HEK293 (cell line): ENCODE measurements at regions of chr1 and their contacts with region 1.

Region 1: DNA sequence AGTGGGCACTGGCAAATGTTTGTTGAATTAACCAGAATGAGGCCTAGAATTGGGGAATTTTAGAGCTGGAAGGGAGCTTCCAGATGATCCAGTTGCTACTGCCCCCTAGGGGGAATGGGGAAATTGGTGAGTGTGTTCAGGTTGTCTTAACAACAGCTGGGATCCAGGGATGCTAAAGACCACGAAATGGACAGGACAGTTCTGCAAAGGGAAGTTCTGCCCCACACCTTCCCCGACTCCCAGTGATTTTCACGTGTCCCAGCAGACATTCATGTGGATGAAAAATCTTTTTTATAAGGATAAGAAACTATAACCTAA is 33.9 kb downstream of the TRIM62 start:
- H3K4me3 ChIP-seq: no peak overlapping the region
- H3K27ac ChIP-seq: no peak overlapping the region
- H3K4me1 ChIP-seq: no peaks in the 10 kb centered on the region
- CTCF ChIP-seq: no peak

Region 2: DNA sequence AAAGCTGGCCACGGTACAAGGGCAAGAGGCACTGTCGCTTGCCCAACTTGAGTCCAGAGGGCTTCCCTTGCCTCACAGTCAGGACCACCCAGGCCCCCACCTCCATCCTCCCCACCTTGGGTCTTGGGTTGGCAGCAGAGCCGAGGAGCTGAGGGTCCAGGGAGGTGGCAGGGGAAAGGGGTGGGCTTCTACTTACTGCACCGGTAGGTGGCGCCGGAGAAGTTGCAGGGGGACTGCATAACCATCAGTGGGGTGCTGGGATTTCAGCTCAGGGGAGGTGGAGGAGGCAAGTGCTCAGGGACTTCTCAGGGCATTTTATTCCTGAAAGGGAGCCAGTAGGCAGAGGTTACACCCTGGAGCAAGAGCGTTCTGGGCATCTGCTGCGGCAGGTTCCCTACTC is 10.2 kb before region 1 on chr1:
- CTCF ChIA-PET with region 1: interaction called, 14 read pairs
- POLR2A ChIA-PET with region 1: interaction called, 9 read pairs
- H3K4me3 ChIP-seq: no peak overlapping the region
- H3K27ac ChIP-seq: no peak overlapping the region
- H3K4me1 ChIP-seq: peaks cover 3% of the 10 kb centered on the region
- CTCF ChIP-seq: peak; percentile 44; the same call in 1 of the 2 replicates